ENCODE measurements at regions of chr4 and their contacts with region 1.

Region 1: DNA sequence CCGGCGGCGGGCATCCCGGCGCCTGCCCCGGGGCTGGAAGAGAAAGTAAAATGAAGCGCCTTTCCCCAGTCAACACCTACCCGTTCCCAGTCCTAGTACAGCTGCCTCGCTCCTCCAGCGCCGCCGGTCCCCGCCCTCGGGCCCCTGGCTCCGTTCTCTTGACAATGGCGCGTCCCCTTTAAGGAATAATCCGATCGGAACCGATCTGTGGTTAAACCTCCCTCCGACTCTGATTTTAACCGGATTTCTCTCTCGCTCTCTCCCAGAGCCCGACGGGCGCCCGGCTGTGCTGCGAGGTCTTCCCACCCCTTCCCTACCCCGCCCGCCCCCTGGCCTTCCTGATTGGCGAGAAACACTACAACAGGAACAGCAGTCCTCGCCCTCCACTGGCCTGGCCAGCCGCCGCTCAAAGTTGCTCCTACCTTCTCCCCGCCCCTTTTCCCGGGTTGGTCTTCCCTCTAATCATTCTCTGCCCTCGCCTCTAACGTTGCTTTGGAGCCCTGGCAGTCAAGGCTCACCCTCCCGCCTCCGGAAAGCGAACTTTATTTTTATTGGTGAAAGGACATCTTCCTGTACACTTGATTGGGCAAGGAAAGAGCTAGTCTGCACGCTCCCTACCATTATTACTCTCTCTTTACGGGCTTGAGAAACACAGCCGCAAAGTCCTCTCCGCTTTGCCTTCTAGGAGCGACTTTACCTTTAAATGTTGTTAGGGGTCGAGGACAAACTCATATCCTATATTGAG is at the start of gene FRYL:
- DNase-seq: peak; percentile 100
- H3K4me3 Mint-ChIP-seq: peak within 1 kb of the TSS; percentile 96
- H3K27ac Mint-ChIP-seq: peak within 1 kb of the TSS; percentile 98
- H3K4me1 Mint-ChIP-seq: peaks cover 38% of the 10 kb centered on the region
- H3K27me3 Mint-ChIP-seq: no peaks in the 10 kb centered on the region
- total RNA-seq, gene FRYL: 59.1 to 67.3 TPM

Region 2: GRCh38 chr4:48127682-48128394 is 652.3 kb before region 1 on chr4:
- CTCF ChIA-PET with region 1: no interaction called
- POLR2A ChIA-PET with region 1: no interaction called
- intact Hi-C with region 1: loop called (anchors 1 kb)
- DNase-seq: peak; percentile 93
- H3K4me3 Mint-ChIP-seq: peak overlapping the region; percentile 63
- H3K27ac Mint-ChIP-seq: peak overlapping the region; percentile 95
- H3K4me1 Mint-ChIP-seq: peaks cover 89% of the 10 kb centered on the region
- H3K27me3 Mint-ChIP-seq: no peaks in the 10 kb centered on the region

Region 3: DNA sequence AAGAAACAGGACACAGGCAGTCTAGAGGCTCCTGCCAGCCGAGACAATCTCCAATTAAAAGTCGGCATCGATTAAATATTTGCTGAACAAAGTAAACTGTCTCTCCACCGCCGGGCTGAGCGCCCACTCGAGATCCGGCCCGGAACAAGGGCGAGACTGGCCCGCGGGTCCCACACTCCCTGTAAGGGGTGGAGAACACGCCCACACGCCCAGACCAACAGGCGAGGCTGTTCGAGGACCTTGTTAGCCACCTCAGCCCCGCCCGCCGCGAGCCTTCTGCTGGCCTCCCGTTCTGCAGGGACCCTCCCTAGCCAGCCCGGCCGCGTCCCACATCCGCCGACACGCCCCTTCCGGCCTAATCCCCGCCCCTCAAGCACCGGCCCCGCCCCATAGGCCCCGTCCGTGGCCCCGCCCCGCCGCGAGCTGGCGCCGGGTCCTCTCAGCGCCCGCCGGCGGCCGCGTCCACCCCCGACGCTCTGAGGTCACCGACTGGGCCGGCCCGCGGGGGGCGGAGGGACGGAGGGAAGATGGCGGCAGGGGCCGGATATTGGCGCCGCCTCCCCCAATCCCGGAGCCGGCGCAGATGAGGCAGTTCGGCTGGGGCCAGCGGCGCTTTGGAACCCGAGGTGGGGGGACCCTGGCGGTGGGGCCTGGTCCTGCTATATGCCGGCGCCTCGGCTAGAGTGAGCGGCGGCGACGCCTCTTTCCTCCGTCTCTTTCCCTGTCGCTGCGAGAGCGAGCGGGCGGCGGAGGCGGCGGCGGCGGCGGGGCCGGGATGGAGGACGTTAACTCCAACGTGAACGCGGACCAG is 439.0 kb before region 1 on chr4 and contains the start of gene SLAIN2:
- CTCF ChIA-PET with region 1: no interaction called
- POLR2A ChIA-PET with region 1: interaction called, 6 read pairs
- intact Hi-C with region 1: loop called (anchors 1 kb)
- DNase-seq: peak; percentile 99
- H3K4me3 Mint-ChIP-seq: peak within 1 kb of the TSS; percentile 99
- H3K27ac Mint-ChIP-seq: peak within 1 kb of the TSS; percentile 98
- H3K4me1 Mint-ChIP-seq: peaks cover 64% of the 10 kb centered on the region
- H3K27me3 Mint-ChIP-seq: no peaks in the 10 kb centered on the region
- total RNA-seq, gene SLAIN2: 54.9 to 63.8 TPM

Region 4: DNA sequence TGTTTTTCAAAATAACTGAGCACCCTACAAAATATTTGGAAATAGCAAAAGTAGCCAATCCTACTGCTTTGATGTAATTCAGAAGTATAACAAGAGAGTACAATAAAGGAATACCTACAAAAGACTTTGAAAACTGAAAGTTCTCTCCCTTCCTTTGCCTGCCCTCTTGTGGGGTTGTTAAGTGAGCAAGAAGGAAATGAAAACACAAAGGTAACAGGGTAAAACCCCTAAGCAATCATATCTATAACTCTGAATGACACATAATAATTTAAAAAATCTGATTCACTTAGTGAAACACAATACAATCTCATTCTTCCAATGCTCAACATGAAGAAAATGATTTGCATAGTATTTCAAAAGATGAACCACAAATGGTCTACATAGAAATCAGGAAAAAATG is 98.3 kb before region 1 on chr4:
- CTCF ChIA-PET with region 1: no interaction called
- POLR2A ChIA-PET with region 1: no interaction called
- intact Hi-C with region 1: loop called (anchors 1 kb)
- DNase-seq: no peak
- H3K4me3 Mint-ChIP-seq: no peak overlapping the region
- H3K27ac Mint-ChIP-seq: peak overlapping the region; percentile 39
- H3K4me1 Mint-ChIP-seq: peaks cover 36% of the 10 kb centered on the region
- H3K27me3 Mint-ChIP-seq: no peaks in the 10 kb centered on the region

Region 5: GRCh38 chr4:48727666-48728459 is 52.3 kb before region 1 on chr4:
- CTCF ChIA-PET with region 1: no interaction called
- POLR2A ChIA-PET with region 1: no interaction called
- intact Hi-C with region 1: loop called (anchors 5 kb)
- DNase-seq: no peak
- H3K4me3 Mint-ChIP-seq: no peak overlapping the region
- H3K27ac Mint-ChIP-seq: no peak overlapping the region
- H3K4me1 Mint-ChIP-seq: peaks cover 88% of the 10 kb centered on the region
- H3K27me3 Mint-ChIP-seq: no peaks in the 10 kb centered on the region

Region 6: DNA sequence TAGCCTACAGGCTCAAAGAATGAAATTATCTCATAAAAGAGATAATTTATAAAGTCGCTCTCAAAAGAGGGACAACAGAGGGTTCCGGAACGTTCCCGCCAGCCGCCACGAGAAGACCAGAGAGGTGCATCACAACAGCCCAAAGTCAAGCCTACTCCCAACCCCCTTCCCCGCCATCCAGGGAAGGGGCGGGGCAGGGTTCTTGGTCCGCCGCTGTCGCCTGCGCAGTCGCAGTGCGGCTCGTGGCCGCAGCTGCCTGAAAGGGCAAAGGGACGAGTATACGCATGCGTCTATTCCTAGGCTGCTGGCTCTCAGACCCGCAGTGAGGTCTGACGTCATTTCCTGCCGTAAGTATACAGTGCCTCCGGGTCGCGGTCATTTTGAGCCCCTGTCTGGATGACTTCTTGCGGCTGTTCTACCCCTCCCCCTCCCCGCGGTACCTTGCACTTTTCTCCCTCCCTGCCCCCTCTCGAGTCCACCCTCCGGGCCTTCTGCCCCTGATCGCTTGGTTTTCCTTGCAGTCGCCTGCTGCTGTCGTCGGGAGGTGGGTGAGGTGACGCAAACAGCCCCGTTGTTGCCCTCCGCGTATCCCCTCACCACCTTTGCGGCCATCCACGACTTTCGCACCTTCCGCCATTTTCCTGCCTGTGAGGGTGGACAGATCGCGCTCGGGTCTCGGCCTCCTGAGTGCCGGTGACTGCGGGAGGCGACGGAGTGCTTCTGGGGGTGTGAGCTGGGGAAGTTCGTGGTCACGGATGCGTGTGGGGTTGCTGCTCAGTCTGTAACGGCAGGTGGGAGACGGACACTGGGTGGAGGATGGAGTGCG is 50.7 kb after region 1 on chr4 and contains the start of gene OCIAD1:
- CTCF ChIA-PET with region 1: no interaction called
- POLR2A ChIA-PET with region 1: interaction called, 19 read pairs
- intact Hi-C with region 1: loop called (anchors 1 kb)
- DNase-seq: peak; percentile 97
- H3K4me3 Mint-ChIP-seq: peak within 1 kb of the TSS; percentile 100
- H3K27ac Mint-ChIP-seq: peak within 1 kb of the TSS; percentile 99
- H3K4me1 Mint-ChIP-seq: peaks cover 19% of the 10 kb centered on the region
- H3K27me3 Mint-ChIP-seq: peaks cover 2% of the 10 kb centered on the region
- total RNA-seq, gene OCIAD1: 100 to 107 TPM

Region 7: DNA sequence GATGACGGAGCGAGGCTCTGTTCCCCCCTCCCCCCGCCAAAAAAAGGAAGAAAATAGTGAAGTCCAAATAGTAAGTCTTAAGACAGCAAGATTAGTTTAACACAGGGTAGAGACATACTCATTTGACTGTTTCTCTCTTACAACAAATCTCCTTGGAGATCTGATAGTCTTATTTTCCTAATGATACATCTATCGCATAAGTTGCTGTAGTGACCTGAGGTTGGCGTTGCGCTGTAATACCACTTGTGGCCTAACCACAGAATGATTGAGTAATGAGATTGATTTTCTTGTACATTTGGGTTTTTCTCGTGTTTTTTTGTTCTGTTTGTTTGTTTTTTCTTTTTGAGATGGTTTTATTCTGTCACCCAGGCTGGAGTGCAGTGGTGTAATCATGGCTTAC is 78.0 kb after region 1 on chr4:
- CTCF ChIA-PET with region 1: no interaction called
- POLR2A ChIA-PET with region 1: no interaction called
- intact Hi-C with region 1: no loop called
- DNase-seq: no peak
- H3K4me3 Mint-ChIP-seq: no peak overlapping the region
- H3K27ac Mint-ChIP-seq: no peak overlapping the region
- H3K4me1 Mint-ChIP-seq: peaks cover 2% of the 10 kb centered on the region
- H3K27me3 Mint-ChIP-seq: no peaks in the 10 kb centered on the region

Region 8: DNA sequence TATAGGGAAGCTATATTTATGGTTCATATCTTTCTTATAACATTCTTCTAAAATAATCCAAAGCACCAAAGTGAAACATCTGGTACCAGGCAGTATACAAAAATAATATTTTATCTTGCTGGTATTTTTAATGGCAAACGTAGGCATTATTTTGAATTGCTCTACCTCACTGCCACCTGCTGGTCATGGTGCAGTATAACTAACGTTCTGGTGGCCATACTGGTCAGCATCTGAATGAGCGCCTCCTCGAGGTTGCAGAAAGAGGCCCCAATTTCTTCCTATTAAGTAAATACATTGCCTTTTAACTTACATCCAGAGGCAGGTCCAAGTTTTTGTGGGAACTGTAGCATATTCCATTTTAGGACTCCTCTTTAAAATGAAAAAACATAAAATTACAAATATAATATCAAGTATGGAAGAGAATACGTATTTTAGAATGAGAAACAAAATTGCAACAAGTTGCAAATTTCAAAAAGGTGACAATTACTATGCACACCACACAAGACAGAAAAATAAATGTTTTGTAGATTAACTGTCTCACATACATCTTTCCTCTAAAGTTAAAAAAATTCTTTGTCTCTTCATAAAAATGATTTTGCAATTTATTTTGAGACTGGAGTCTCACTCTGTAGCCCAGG is 183.0 kb after region 1 on chr4:
- CTCF ChIA-PET with region 1: interaction called, 3 read pairs
- POLR2A ChIA-PET with region 1: no interaction called
- intact Hi-C with region 1: loop called (anchors 2 kb)
- DNase-seq: peak; percentile 77
- H3K4me3 Mint-ChIP-seq: no peak overlapping the region
- H3K27ac Mint-ChIP-seq: no peak overlapping the region
- H3K4me1 Mint-ChIP-seq: no peaks in the 10 kb centered on the region
- H3K27me3 Mint-ChIP-seq: no peaks in the 10 kb centered on the region

Measured in activated CD4-positive, alpha-beta memory T cell treated with anti-CD3 and anti-CD28 coated beads for 36 hours (primary cell).